ENCODE measurements at regions of chr7 and their contacts with region 1.

Region 1: GRCh38 chr7:17298207-17298839 is at the start of gene AHR:
- DNase-seq: peak in 1 of 2 donors; percentile 96
- H3K4me3 ChIP-seq: peak within 1 kb of the TSS; percentile 91 to 97
- H3K27ac ChIP-seq: peak within 1 kb of the TSS; percentile 98
- H3K4me1 ChIP-seq: peaks cover 17% of the 10 kb centered on the region
- H3K27me3 ChIP-seq: no peaks in the 10 kb centered on the region
- CTCF ChIP-seq: no peak
- POLR2A ChIP-seq: peak; percentile 74 to 89
- total RNA-seq, gene AHR: 122 TPM

Region 2: DNA sequence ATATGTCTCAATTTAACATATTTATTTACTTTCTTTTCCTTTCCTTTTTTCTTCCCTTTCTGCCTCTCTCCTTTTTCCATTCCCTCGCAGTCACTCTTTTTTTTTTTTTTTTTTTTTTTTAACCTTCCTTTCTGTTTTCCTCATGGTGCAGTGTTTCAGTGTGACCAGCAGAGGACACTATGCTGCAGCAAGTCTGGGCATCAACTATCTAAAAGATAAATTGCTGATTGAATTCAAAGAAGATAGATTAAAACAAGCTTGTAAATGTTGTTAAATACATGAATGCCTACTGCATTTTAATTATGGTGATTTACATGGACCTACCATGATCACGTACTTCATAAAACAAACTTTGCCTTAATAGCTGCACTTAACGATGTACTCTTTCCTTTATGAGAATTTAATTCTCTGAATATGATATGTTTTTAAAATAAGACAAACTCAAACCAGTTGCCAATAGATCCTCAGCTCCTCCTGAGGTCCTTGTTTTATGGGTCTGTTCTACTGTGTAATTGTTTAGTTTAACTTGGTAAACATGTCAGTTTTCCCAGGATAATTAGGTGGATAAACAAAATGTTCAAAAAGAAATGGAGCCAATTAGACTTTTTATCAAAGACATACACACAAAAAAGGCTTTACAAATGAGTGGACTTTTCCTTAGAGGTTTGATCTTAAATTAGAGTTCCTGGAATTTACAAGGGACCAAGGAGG is 315.5 kb before region 1 on chr7:
- intact Hi-C with region 1: loop called (anchors 10 kb)
- DNase-seq: no peak
- H3K4me3 ChIP-seq: no peak overlapping the region
- H3K27ac ChIP-seq: no peak overlapping the region
- H3K4me1 ChIP-seq: peaks cover 34% of the 10 kb centered on the region
- H3K27me3 ChIP-seq: no peaks in the 10 kb centered on the region
- CTCF ChIP-seq: peak; percentile 39 to 80 (median 45)
- POLR2A ChIP-seq: no peak

Region 3: GRCh38 chr7:17646253-17646956 is 348.1 kb after region 1 on chr7:
- intact Hi-C with region 1: loop called (anchors 5 kb)
- DNase-seq: no peak
- H3K4me3 ChIP-seq: no peak overlapping the region
- H3K27ac ChIP-seq: no peak overlapping the region
- H3K4me1 ChIP-seq: peaks cover 12% of the 10 kb centered on the region
- H3K27me3 ChIP-seq: no peaks in the 10 kb centered on the region
- CTCF ChIP-seq: no peak
- POLR2A ChIP-seq: no peak

Region 4: GRCh38 chr7:17758008-17758407 is 459.7 kb after region 1 on chr7:
- intact Hi-C with region 1: no loop called
- DNase-seq: no peak
- H3K4me3 ChIP-seq: no peak overlapping the region
- H3K27ac ChIP-seq: no peak overlapping the region
- H3K4me1 ChIP-seq: no peaks in the 10 kb centered on the region
- H3K27me3 ChIP-seq: no peaks in the 10 kb centered on the region
- CTCF ChIP-seq: no peak
- POLR2A ChIP-seq: no peak

Measured in vagina (tissue), 2 donors.